ENCODE measurements at regions of chr1 and their contacts with region 1.

Region 1: DNA sequence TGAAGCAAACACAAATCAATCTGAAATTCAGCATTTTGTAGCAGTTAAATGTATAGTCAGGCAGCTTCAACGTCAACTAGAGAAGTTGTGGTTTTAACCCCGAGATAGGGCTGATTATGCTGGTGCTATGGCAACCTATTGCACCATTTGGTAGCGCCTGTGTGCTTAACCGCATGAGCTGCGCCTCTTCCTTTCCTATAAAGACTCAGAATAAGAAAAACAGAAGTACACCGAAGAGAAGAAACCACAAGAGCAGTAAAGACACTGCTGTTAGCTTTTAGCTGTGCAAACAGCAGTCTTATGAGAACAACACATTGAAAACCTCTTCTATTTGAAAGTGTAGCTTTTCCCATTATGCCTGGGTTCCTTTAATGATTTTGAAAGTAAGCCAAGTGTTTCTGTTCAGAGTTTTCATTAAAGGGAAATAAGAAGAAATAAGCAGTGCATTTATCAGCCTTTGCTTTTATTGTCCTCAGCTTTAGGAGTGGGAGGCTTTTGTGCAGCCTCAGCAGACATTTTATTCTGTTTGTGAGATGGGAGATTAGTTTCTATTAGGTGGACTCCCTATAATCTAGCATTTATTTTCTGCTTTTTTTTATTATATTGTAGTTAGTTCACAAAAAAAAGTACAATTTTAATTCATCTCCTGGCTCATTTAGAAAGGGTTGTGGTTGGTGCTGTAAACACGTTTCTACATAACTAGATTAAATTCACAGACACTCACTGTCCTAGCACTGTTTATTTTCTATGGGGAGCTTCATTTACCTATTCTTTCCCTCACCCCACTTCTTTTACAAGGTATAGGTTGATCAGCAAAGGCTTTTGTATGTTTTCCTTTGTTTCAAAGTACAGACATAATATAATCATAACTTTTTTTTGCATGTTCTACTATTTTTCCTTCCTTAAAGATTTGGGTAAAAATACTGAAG is 43.3 kb downstream of the PTPRC start:
- DNase-seq: peak; percentile 89
- H3K4me3 Mint-ChIP-seq: peak overlapping the region; percentile 48
- H3K27ac Mint-ChIP-seq: peak overlapping the region; percentile 95
- H3K4me1 Mint-ChIP-seq: peaks cover 84% of the 10 kb centered on the region
- H3K27me3 Mint-ChIP-seq: no peaks in the 10 kb centered on the region

Region 2: DNA sequence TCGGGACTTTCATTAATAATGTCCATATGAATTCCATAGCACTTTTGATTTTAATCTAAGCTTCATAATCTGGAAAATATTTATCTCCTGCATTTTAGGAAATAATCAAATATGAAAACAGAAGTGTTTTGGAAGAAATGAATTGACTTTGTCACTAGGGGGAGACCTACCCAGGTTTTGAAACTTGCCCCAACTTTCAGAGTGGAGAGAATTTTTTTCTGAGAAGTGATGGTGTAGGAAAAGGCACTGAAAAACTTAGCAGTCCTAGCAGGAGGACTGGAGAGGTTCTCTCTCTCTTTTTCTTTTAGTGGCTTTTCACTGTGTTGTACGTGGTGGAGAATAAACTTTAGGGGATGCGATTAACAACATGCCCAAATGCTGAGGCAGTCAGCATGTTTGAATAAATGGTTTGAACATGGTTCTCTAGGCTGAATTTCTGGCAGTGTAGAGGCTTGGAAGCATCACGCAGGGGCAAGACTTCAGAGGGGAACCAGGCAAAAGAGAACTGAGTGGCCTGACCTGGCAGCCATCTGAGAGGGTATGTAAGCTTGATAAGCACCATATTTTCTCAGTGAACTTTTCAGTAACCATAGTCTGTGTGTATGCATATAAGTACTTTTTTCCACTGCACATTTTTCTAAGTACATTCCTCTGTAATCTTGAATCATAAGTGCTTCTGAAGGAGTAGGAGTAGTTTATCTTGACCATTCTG is 593.6 kb before region 1 on chr1:
- CTCF ChIA-PET with region 1: interaction called, 3 read pairs
- POLR2A ChIA-PET with region 1: no interaction called
- intact Hi-C with region 1: loop called (anchors 10 kb)
- DNase-seq: no peak
- H3K4me3 Mint-ChIP-seq: no peak overlapping the region
- H3K27ac Mint-ChIP-seq: no peak overlapping the region
- H3K4me1 Mint-ChIP-seq: peaks cover 7% of the 10 kb centered on the region
- H3K27me3 Mint-ChIP-seq: peaks cover 2% of the 10 kb centered on the region

Region 3: GRCh38 chr1:198620951-198621824 is 60.9 kb before region 1 on chr1:
- CTCF ChIA-PET with region 1: interaction called, 5 read pairs
- POLR2A ChIA-PET with region 1: interaction called, 32 read pairs
- intact Hi-C with region 1: loop called (anchors 1 kb)
- DNase-seq: peak; percentile 84
- H3K4me3 Mint-ChIP-seq: peak overlapping the region; percentile 74
- H3K27ac Mint-ChIP-seq: peak overlapping the region; percentile 94
- H3K4me1 Mint-ChIP-seq: peaks cover 87% of the 10 kb centered on the region
- H3K27me3 Mint-ChIP-seq: no peaks in the 10 kb centered on the region

Region 4: DNA sequence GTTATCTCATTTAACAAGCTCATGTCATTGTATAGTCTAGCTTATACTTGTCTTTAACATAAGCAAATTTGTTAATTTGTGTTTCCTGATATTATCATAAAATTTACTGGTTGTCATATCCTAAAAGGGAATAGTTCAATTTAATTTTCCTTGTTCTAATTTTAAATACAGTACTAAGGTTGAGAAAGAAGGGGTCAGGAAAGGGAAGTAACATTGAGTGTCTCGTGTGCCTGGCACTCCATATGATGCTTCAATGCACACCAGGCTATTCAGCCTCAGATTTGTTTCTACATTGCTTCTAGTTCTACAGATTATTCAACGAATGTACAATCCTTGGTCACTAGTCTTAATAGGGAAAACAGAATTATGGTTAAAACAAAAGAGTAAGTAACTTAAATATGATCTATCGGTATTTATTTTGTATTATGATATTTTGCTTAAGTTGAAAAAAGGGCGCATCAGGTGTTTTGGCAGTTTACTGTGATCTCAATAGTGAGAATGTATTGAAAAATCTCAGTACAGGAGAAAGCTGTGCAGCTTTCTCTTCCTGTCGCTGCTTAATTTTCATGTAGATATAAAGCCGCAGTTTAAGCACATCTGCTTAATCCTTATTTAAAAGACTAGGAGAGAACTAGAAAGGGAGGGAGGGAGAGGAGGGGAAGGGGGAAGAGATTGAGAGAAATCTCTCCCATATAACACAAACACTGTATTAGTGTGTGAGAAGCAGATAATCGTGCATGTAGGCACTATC is 30.3 kb before region 1 on chr1:
- CTCF ChIA-PET with region 1: interaction called, 5 read pairs
- POLR2A ChIA-PET with region 1: interaction called, 114 read pairs
- intact Hi-C with region 1: loop called (anchors 1 kb)
- DNase-seq: no peak
- H3K4me3 Mint-ChIP-seq: peak overlapping the region; percentile 72
- H3K27ac Mint-ChIP-seq: peak overlapping the region; percentile 97
- H3K4me1 Mint-ChIP-seq: peaks cover 69% of the 10 kb centered on the region
- H3K27me3 Mint-ChIP-seq: no peaks in the 10 kb centered on the region

Region 5: DNA sequence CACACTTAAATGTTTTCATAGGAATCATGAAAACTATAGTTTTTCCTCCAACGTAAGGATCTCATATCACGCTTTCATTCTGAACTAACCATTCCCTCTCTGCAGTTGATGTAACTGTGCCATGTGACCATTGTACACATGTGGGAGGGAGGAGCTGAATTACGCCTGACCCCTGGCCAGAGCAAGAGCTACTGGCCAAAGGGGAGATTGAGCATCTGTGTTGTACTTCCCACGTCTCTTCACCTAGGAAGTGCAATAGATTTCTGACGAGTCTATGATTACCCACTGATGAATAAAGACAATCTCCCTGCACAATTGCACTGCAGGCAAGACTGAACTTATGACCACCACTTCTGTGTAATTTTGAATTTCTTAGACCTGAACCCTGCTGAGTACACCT is 19.3 kb before region 1 on chr1:
- CTCF ChIA-PET with region 1: interaction called, 8 read pairs
- POLR2A ChIA-PET with region 1: interaction called, 114 read pairs
- intact Hi-C with region 1: no loop called
- DNase-seq: peak; percentile 41
- H3K4me3 Mint-ChIP-seq: peak overlapping the region; percentile 69
- H3K27ac Mint-ChIP-seq: peak overlapping the region; percentile 92
- H3K4me1 Mint-ChIP-seq: peaks cover 78% of the 10 kb centered on the region
- H3K27me3 Mint-ChIP-seq: no peaks in the 10 kb centered on the region

Region 6: DNA sequence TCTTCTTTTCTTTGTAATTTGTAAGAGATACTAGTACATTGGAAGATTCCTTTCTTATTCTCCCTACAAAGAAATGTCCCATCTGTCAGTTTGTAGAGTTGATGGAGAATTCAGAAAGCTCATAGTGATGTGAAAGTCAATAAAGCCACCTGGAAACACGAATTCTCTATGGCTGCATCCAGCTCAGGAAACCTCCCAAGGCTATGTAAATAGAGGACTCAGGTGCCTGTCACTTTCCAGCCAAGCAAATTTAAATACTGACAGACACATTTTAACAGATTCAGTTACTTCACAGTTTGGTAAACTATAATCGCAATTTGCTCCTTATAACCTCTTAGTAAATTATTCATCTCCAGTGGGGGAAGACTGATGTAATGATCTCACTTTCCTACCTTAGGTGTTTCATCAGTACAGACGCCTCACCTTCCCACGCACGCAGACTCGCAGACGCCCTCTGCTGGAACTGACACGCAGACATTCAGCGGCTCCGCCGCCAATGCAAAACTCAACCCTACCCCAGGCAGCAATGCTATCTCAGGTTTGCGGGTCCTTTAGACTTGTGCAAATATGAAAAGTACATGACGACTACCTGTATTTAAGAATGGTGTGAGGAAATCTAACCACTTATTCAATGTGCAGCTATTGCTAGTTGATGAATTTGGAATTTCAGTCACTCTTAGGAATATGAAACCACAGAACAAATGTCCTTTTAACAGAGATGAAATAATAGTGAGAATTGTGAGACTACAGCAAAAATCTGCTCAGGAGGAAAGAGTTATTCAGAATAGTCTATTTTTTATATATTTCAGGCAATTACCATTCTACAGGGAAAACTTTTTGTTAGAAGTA is 17.3 kb after region 1 on chr1:
- CTCF ChIA-PET with region 1: interaction called, 4 read pairs
- POLR2A ChIA-PET with region 1: interaction called, 6 read pairs
- intact Hi-C with region 1: loop called (anchors 1 kb)
- DNase-seq: peak; percentile 88
- H3K4me3 Mint-ChIP-seq: peak overlapping the region; percentile 38
- H3K27ac Mint-ChIP-seq: peak overlapping the region; percentile 73
- H3K4me1 Mint-ChIP-seq: peaks cover 80% of the 10 kb centered on the region
- H3K27me3 Mint-ChIP-seq: no peaks in the 10 kb centered on the region

Region 7: DNA sequence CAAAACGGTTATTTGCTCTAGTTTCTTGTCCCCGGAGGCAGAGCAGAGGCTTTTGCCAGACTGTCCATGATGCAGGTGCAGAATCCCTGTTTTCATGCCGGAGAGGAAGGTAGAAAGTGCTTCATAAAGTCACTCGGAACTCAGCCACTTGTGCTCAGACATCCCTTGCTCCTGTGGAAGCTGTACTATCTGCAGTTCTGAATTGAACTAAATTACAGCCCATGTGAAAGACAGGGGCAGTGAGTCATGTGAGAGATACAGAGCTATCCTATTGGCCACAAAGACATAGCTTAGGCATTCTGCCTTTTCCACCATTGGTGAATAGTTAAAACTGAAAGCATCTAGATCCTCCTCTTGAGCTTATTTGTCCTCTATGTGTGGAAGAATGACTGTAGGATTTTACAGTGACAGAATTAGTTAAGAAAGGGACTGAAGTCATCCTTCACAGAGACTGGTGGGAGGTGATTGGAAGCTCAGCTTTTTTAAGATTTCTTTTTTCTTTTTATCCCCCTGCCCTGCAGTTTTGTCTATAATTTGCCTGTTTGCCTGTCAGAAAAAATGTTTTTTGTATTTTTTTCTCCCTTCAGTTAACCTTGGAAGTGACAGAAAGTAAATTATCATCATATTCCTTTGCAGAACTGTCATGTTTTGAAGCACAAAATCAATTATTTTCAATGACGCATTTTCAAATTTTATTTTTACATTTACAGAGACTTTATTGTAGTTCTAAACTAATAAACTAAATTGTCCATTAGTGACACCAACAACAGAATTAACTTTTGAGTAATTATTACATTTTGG is 255.3 kb after region 1 on chr1:
- CTCF ChIA-PET with region 1: no interaction called
- POLR2A ChIA-PET with region 1: no interaction called
- intact Hi-C with region 1: no loop called
- DNase-seq: peak; percentile 53
- H3K4me3 Mint-ChIP-seq: peak overlapping the region; percentile 84
- H3K27ac Mint-ChIP-seq: peak overlapping the region; percentile 77
- H3K4me1 Mint-ChIP-seq: peaks cover 23% of the 10 kb centered on the region
- H3K27me3 Mint-ChIP-seq: no peaks in the 10 kb centered on the region

Measured in activated CD4-positive, alpha-beta memory T cell treated with anti-CD3 and anti-CD28 coated beads for 36 hours (primary cell).